ENCODE measurements at regions of chr3 and their contacts with region 1.

Region 1: GRCh38 chr3:112013058-112013783 is 14.5 kb downstream of the TAGLN3 start:
- DNase-seq: no peak
- ATAC-seq: peak; percentile 94
- H3K4me3 ChIP-seq: no peak overlapping the region
- H3K27ac ChIP-seq: no peak overlapping the region
- H3K4me1 ChIP-seq: no peaks in the 10 kb centered on the region
- H3K27me3 ChIP-seq: no peaks in the 10 kb centered on the region; a peak in 1 of 4 replicates
- CTCF ChIP-seq: peak; percentile 70 to 80 (median 72)
- EP300 ChIP-seq: no peak
- POLR2A ChIP-seq: no peak
- RAD21 ChIP-seq: peak; percentile 81

Region 2: DNA sequence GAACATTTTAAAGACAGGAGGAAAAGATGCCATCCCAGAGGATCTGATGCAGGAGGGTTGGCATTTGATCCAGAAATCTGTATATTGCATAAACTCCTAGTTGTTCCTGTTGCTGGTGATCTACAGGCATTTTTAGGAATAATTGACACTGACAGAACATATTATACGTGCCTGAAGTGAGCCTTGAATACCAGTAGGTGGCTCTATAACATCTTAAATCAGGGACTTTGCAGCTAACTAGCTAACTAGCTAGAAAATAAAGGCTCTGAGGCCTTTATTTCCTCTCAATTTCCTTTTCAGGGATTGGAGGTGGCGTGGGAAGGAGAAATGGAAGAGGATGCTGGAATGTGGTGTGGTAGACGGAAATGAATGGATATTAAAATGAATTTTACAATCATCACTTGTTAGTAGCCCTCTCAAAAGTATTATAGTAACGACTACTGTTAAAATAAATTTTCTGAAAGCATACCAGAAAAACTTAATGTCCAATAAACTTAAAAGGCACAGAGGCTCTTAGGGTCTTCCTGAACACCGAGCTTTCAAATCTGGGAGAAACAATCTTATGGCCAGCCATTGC is 344.2 kb before region 1 on chr3:
- CTCF ChIA-PET with region 1: interaction called, 91 read pairs
- POLR2A ChIA-PET with region 1: no interaction called
- RAD21 ChIA-PET with region 1: interaction called, 30 read pairs
- SMC1A ChIA-PET with region 1: interaction called, 15 read pairs
- in situ Hi-C with region 1: no loop called
- intact Hi-C with region 1: no loop called
- DNase-seq: no peak
- ATAC-seq: peak; percentile 88
- H3K4me3 ChIP-seq: no peak overlapping the region
- H3K27ac ChIP-seq: no peak overlapping the region
- H3K4me1 ChIP-seq: peaks cover 8% of the 10 kb centered on the region; the same call in 1 of the 2 replicates
- H3K27me3 ChIP-seq: no peaks in the 10 kb centered on the region
- CTCF ChIP-seq: peak; percentile 69 to 79 (median 76)
- EP300 ChIP-seq: no peak
- POLR2A ChIP-seq: no peak
- RAD21 ChIP-seq: peak; percentile 84

Region 3: DNA sequence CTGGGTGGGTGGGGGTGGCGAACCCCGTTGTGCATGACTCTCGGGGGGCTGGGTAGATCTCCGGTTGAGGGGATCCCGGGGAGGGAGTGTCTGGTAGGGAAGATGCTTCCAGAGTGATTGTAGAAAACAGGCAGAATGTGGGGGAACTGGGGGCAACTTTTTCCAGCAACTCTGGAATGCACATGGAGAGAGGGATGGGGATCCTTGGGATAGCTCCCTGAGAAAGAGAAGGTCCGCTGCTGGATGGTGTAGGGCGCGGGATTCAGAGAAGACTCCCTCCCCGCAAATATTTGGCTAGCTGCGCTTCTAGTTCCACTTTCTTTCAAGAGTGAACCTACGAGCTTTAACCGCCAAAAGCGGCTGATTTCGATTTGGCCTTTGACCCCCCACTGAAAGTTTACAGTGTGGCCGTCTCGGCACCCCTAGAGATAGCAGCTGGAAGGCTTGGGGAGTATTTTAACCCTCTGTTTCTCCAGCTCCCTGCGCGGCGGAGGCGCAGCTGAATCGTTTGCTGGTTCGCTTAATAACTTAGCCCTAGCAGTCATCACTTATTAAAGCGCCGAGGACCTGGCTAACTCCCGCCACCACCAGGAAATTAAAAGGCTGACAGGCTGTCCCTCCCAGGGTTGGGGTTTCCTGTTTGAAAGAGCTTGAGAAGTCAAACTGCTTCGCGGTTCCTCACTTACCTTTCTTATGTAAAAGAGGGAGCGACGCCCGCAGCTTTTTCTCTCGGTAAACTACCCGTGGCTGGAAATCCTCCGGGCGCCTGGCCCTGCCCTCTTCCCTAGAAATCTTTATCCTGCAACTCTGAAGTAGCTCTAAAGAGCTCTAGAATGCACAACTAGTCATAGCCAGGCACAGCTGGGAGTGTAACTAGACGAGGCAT is 153.0 kb before region 1 on chr3:
- CTCF ChIA-PET with region 1: interaction called, 21 read pairs
- POLR2A ChIA-PET with region 1: no interaction called
- RAD21 ChIA-PET with region 1: interaction called, 14 read pairs
- SMC1A ChIA-PET with region 1: interaction called, 4 read pairs
- in situ Hi-C with region 1: no loop called
- intact Hi-C with region 1: no loop called
- DNase-seq: peak; percentile 30
- ATAC-seq: peak; percentile 91
- H3K4me3 ChIP-seq: peak overlapping the region; percentile 64
- H3K27ac ChIP-seq: no peak overlapping the region
- H3K4me1 ChIP-seq: peaks cover 5% of the 10 kb centered on the region
- H3K27me3 ChIP-seq: peaks cover 2 to 13% of the 10 kb centered on the region in 2 experiments
- CTCF ChIP-seq: peak; percentile 21 to 33 (median 33); a peak in 3 of 6 replicates
- EP300 ChIP-seq: no peak
- POLR2A ChIP-seq: no peak
- RAD21 ChIP-seq: peak; percentile 53

Region 4: DNA sequence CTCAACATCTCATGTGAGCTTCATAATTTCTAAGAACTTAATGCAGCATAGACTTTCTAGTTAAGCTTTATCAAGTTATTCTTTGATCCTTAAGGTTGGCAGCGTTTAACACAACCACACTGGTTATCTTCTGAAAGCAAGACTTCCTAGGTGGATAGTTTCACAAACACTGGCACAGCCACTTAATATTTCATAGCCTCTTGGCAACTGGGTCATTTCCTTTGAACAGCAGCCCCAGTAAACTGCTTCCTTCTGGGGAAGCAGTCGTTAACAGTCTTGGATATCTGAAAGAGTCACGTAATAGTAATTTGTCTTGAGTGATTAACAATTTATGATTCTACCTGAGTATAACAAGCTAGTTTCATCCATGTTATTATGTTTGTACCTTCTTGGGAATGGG is 80.3 kb before region 1 on chr3:
- CTCF ChIA-PET with region 1: interaction called, 13 read pairs
- POLR2A ChIA-PET with region 1: no interaction called
- RAD21 ChIA-PET with region 1: interaction called, 4 read pairs
- SMC1A ChIA-PET with region 1: no interaction called
- in situ Hi-C with region 1: no loop called
- intact Hi-C with region 1: no loop called
- DNase-seq: no peak
- ATAC-seq: no peak
- H3K4me3 ChIP-seq: no peak overlapping the region
- H3K27ac ChIP-seq: no peak overlapping the region
- H3K4me1 ChIP-seq: no peaks in the 10 kb centered on the region
- H3K27me3 ChIP-seq: no peaks in the 10 kb centered on the region
- CTCF ChIP-seq: no peak
- EP300 ChIP-seq: no peak
- POLR2A ChIP-seq: no peak
- RAD21 ChIP-seq: no peak

Region 5: GRCh38 chr3:111989061-111989678 is 24.1 kb before region 1 on chr3:
- CTCF ChIA-PET with region 1: interaction called, 467 read pairs
- POLR2A ChIA-PET with region 1: interaction called, 9 read pairs
- RAD21 ChIA-PET with region 1: interaction called, 158 read pairs
- SMC1A ChIA-PET with region 1: interaction called, 417 read pairs
- in situ Hi-C with region 1: no loop called
- intact Hi-C with region 1: loop called (anchors 1 kb)
- DNase-seq: no peak
- ATAC-seq: peak; percentile 96
- H3K4me3 ChIP-seq: no peak overlapping the region
- H3K27ac ChIP-seq: no peak overlapping the region
- H3K4me1 ChIP-seq: no peaks in the 10 kb centered on the region
- H3K27me3 ChIP-seq: no peaks in the 10 kb centered on the region
- CTCF ChIP-seq: peak; percentile 57 to 73 (median 68)
- EP300 ChIP-seq: no peak
- POLR2A ChIP-seq: no peak
- RAD21 ChIP-seq: peak; percentile 65

Region 6: DNA sequence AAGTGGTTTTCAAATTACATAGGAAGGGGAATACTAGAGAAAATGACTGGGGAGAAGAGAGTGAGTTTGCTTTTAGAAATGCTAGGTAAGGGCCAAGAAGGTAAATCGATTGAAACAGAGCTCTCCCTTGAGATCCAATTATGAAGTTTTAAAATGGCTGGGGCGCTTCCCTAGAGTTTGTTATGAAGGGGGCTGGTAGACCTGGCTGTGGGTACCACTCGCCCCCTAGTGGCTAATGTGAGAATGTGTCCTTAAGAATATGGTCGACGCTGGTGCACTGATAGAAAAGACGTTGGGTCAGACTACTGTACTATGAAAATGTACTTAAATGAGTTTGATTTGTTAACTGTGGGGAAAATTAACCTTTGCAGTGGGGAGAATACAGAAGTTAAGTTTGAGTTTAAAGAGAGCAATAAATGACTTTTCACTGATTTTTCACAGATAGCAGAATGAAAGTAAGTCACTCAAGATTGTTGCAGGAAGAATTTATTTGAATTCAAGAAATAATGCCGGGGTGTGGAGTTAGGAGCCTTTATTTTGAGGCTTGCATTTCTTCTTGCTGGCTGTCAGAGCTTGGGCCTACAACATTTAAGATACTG is 30.5 kb after region 1 on chr3:
- CTCF ChIA-PET with region 1: interaction called, 87 read pairs
- POLR2A ChIA-PET with region 1: interaction called, 3 read pairs
- RAD21 ChIA-PET with region 1: interaction called, 25 read pairs
- SMC1A ChIA-PET with region 1: interaction called, 33 read pairs
- in situ Hi-C with region 1: no loop called
- intact Hi-C with region 1: loop called (anchors 1 kb)
- DNase-seq: peak; percentile 8
- ATAC-seq: peak; percentile 95
- H3K4me3 ChIP-seq: no peak overlapping the region
- H3K27ac ChIP-seq: no peak overlapping the region
- H3K4me1 ChIP-seq: no peaks in the 10 kb centered on the region
- H3K27me3 ChIP-seq: peaks cover 0 to 6% of the 10 kb centered on the region in 2 experiments; a peak in 1 of 4 replicates
- CTCF ChIP-seq: peak; percentile 80 to 92 (median 86)
- EP300 ChIP-seq: no peak
- POLR2A ChIP-seq: no peak
- RAD21 ChIP-seq: peak; percentile 69

Region 7: DNA sequence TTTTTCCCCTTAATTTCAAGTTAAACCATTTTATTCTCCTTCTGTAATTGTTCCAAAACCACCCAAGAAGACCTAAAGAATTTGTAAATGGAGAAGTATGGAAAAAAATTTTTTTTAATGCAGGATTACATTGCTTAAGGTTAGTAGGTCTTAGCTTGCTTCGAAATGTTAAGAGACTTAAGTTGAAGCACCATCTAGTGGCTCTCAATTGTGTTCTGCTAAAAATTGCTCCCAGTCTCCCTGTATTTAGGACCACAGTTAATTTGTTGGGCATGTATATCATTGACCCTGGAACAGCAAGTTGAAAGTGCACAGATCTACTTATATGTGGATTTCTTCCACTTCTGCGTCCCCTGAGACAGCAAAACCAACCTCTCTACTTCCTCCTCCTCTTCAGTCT is 801.0 kb after region 1 on chr3:
- CTCF ChIA-PET with region 1: no interaction called
- POLR2A ChIA-PET with region 1: no interaction called
- RAD21 ChIA-PET with region 1: no interaction called
- SMC1A ChIA-PET with region 1: no interaction called
- in situ Hi-C with region 1: no loop called
- intact Hi-C with region 1: no loop called
- DNase-seq: no peak
- ATAC-seq: peak; percentile 29; the same call in 1 of the 3 replicates
- H3K4me3 ChIP-seq: no peak overlapping the region
- H3K27ac ChIP-seq: no peak overlapping the region
- H3K4me1 ChIP-seq: peaks cover 19% of the 10 kb centered on the region
- H3K27me3 ChIP-seq: no peaks in the 10 kb centered on the region
- CTCF ChIP-seq: peak; percentile 1 to 12 (median 10); a peak in 1 of 6 replicates
- EP300 ChIP-seq: no peak
- POLR2A ChIP-seq: no peak
- RAD21 ChIP-seq: peak; percentile 40